GM13977 (cell line): ENCODE measurements at regions of chr13 and their contacts with region 1.

Region 1: DNA sequence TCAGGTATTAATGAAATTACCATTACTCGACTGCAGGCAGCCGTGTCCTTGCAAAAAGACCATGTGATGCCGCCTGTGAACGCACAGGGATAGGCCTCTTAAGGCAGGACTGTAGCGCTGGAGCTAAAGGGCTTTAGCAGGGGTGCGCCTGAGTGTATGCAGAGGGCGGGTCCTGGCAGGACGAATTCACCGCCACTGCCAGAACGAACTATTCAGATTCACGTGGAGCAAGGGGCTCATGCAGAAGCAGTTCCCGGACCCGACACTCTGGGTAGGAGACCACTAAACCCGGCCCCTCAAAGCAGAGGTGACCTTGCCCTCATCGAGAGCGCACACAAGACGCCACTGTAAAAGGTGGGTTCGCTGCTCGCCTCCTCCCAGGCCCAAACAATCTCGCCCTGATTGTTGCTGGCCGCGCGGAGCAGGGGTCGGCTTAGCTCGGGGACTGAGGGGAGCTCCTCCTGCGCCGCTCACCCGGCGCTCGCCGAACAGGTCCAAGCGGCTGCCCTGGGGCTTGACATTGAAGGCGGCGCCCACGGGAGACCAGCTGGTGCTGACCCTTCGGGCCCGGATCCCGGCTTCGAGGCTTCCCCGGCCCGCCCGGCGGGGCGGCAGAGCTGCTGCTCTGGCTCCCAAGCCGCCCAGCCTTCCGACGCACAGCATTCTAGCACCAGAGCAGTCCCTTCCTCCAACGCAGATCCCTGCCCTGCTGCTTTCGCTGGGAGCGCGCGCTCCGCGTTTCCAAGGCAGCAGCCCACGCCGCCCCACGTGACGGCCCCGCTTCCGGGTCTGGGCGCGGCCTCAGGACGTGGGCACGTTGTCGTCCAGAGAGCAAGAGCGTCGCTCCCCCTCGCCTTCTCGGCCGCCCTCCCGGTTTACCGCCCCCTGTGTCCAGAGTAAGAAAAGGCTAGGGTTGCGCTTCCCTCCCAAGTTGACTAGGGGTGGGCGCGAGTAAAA is at the start of gene MIPEP:
- DNase-seq: peak; percentile 95
- CTCF ChIP-seq: peak; percentile 93

Region 2: GRCh38 chr13:22665512-22666153 is 1223.3 kb before region 1 on chr13:
- in situ Hi-C with region 1: no loop called
- DNase-seq: no peak
- CTCF ChIP-seq: no peak

Region 3: DNA sequence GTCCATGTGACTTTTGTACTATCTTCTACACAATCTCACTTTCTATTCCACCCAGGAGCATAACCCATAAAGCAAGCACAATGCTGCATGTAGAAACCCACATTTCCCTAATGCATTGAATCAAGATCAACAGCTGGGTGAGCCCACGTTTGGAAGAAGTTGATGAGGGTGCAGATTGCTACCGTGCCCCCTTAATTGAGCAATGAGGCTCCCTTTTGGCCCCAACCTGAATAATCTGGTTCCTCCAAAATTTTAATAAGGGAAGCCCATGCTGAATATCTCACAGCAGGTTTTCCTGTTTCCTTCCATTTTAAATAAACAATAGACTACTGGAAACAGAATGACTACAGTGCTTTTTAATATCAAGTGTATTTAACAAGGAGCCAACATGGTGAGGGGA is 1111.7 kb before region 1 on chr13:
- in situ Hi-C with region 1: no loop called
- DNase-seq: no peak
- CTCF ChIP-seq: no peak

Region 4: DNA sequence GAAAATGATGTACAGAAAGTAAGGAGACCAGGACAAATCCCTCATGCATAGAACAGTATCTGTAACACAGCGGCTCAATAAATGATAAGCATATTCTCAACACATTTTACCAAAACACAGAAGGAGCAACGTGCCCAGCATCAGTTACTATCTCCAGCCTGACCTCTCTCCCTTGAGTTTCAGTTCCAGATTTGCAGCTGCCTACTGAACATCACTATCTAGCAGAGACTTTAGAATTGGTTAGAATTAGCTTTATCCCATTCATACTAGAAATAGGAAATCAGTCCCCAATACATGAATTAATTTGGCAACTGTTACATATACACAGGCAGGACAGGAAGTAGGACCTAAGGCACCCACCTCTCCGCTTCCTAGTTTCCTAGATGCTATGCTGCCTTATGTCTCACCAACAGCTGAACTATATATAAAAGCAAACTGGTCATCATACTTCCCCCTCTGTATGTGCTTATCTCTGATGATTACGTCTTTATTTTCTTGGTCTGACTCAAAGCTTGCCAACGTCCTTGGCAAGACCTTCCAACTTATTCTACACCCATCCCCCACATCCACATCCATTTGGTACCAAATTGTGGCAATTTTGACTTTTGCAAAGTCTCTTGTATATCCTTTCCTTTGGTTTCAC is 516.6 kb before region 1 on chr13:
- in situ Hi-C with region 1: loop called (anchors 25 kb)
- DNase-seq: peak; percentile 18
- CTCF ChIP-seq: no peak

Region 5: DNA sequence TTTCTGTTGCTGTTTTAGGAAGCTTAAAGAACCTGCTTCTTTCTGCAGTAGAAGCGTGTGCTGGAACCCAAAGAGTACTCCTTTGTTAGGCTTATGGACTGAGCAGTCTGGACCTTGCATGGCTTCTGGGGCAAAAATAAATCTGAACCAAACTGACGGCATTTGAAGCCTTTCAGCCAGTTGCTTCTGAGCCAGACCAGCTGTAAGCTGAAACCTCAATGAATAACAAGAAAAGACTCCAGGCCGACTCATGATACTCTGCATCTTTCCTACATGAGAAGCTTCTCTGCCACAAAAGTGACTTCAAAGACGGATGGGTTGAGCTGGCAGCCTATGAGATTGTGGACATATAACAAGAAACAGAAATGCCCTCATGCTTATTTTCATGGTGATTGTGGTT is 215.6 kb before region 1 on chr13:
- in situ Hi-C with region 1: no loop called
- DNase-seq: no peak
- CTCF ChIP-seq: no peak

Region 6: GRCh38 chr13:24228852-24229458 is 340.0 kb after region 1 on chr13:
- in situ Hi-C with region 1: no loop called
- DNase-seq: peak; percentile 55
- CTCF ChIP-seq: peak; percentile 89

Region 7: DNA sequence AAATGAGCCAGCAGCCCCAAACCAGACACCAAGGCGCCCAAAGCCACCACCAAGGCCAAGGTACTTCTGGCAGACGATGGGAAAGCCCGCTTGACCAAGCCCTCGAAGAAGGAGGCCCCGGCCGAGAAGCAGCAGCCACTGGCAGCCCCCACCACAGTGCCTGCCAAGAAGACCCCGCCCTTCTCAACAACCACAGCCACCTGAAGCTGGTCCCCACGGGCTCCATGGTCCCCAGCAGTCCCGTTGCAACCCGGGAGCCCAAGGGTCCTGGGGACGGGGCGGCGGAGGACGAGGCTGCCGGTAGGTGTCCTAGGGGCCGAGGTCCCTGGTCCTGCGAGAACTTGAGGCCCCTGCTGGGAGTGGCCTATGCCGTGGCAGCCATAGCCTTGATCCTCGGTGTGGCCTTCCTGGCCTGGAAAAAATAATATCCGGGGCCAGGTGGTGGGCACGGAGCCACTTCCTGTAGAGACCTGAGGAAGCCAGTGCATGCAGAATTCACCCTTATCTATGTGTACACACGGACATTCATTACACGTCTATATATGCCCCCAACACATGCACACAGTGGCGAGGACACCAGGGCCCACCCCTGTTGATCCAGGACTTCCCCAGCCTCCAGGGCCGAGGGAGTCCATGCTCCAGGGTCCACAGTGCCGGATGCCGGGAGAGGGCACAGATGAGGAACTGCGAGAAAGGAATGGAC is 434.3 kb after region 1 on chr13:
- in situ Hi-C with region 1: loop called (anchors 5 kb)
- DNase-seq: no peak
- CTCF ChIP-seq: no peak